Activated T-helper 1 cell treated with anti-CD3 and anti-CD28 coated beads, Interleukin-12 subunit alpha, Interleukin-12 subunit beta, Interleukin-2, Interleukin-4 antibody, amounts not matched to agents 30 ng/mL and 10 ng/mL and 1 ng/mL, durations not matched to agents 14 hours and 24 hours and 36 hours (primary cell): ENCODE measurements at regions of chr16 and their contacts with region 1.

Region 1: DNA sequence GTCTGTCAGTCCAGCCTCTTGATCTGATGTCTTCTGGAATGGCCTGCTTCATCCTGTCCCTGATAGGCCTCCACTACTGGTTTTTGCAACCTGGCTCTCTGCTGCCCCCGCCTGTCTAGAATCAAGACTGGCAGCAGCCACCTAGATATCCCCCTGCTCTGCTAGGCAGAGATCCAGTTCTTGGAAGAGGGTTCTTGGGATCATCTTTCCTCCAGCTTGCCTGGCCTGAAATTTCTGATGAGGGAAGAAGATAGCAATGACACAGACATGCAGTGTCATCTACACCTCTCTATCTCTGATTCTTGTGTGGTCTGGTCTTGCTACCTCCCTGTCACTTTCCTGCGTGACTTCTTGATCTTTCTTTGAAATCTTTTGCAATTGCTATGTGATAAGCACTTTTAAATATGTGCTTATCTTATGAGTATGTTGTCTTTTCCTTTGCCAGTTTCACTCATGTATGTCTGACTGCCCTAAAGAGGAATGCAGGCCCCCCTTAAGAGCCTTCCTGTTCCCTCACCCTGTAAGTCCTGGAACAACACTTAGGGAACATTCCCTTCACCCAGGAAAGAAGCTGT is 20.3 kb upstream of the NFATC3 start:
- DNase-seq: peak; percentile 59
- H3K4me3 Mint-ChIP-seq: no peak overlapping the region
- H3K27ac Mint-ChIP-seq: peak overlapping the region; percentile 75
- H3K4me1 Mint-ChIP-seq: peaks cover 81% of the 10 kb centered on the region
- H3K27me3 Mint-ChIP-seq: no peaks in the 10 kb centered on the region

Region 2: GRCh38 chr16:67726106-67727034 is 338.5 kb before region 1 on chr16:
- intact Hi-C with region 1: no loop called
- DNase-seq: no peak
- H3K4me3 Mint-ChIP-seq: no peak overlapping the region
- H3K27ac Mint-ChIP-seq: no peak overlapping the region
- H3K4me1 Mint-ChIP-seq: no peaks in the 10 kb centered on the region
- H3K27me3 Mint-ChIP-seq: no peaks in the 10 kb centered on the region

Region 3: GRCh38 chr16:68079626-68080344 is 14.9 kb after region 1 on chr16:
- intact Hi-C with region 1: loop called (anchors 1 kb)
- DNase-seq: peak; percentile 73
- H3K4me3 Mint-ChIP-seq: peak overlapping the region; percentile 75
- H3K27ac Mint-ChIP-seq: peak overlapping the region; percentile 97
- H3K4me1 Mint-ChIP-seq: peaks cover 86% of the 10 kb centered on the region
- H3K27me3 Mint-ChIP-seq: peaks cover 2% of the 10 kb centered on the region